Right ventricle myocardium inferior (tissue), 1 donor: ENCODE measurements at regions of chr15 and their contacts with region 1.

Region 1: GRCh38 chr15:70892002-70892914 is at the starts of genes LRRC49 and THAP10:
- DNase-seq: peak; percentile 93
- ATAC-seq: peak; percentile 97
- total RNA-seq, gene LRRC49: 70.9 TPM
- total RNA-seq, gene THAP10: 3.7 TPM

Region 2: GRCh38 chr15:70775160-70775559 is 117.1 kb before region 1 on chr15:
- intact Hi-C with region 1: no loop called
- DNase-seq: no peak
- ATAC-seq: no peak

Region 3: DNA sequence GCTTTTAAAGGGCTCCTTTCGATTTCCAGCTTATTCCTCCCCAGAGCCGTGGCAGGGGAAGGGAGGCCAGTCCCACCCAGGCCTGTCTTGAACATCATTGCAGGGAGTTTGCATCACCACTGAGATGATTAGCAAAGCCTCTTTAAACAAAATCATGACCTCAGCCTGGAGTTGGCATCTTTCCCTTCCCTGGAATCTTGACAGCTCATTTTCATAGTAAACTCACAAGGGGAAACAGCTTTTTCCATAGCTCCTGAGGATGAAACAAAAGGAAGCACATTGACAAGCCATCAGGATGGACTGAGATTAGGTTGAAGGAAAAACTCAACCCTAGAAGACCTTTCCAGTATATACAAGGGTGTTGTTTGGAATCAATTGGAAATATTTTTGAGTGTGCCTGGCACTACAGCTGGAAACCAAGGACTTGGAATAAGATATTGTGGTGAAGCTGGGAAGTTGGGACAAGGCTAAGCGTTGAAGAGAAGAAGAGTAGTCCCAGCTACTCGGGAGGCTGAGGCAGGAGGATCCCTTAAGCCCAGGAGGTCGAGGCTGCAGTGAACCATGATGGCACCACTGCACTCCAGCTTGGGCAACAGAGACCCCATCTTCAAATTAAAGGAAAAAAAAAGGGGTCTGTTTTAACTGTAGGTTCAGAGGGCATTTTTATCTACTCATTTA is 35.2 kb before region 1 on chr15:
- intact Hi-C with region 1: no loop called
- DNase-seq: peak; percentile 79
- ATAC-seq: peak; percentile 81

Region 4: GRCh38 chr15:70964058-70964457 is 71.8 kb after region 1 on chr15:
- intact Hi-C with region 1: no loop called
- DNase-seq: no peak
- ATAC-seq: no peak

Region 5: GRCh38 chr15:71103102-71103676 is 210.9 kb after region 1 on chr15:
- intact Hi-C with region 1: loop called (anchors 2 kb)
- DNase-seq: no peak
- ATAC-seq: peak; percentile 42

Region 6: DNA sequence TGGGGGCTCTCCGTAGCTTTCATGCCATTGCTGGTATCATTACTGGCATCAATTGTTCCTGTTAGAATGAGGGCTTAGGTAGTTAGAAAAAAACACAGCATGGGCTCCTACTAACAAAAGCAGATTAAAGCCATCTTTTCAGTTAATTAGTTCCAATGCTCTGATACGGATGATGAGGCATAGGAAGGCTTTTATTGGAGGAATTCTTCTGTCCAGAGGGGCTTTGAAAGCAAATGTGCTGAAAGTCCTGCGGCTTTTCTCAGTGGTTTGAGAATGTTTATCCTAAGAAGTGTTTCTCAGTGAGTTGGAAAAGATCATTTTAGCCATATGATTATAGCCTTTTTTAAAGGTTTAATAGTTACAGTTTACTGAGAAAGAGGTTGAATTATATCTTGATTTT is 421.5 kb after region 1 on chr15:
- intact Hi-C with region 1: no loop called
- DNase-seq: no peak
- ATAC-seq: no peak

Region 7: GRCh38 chr15:71443538-71443937 is 551.3 kb after region 1 on chr15:
- intact Hi-C with region 1: loop called (anchors 1 kb)
- DNase-seq: no peak
- ATAC-seq: no peak

Region 8: DNA sequence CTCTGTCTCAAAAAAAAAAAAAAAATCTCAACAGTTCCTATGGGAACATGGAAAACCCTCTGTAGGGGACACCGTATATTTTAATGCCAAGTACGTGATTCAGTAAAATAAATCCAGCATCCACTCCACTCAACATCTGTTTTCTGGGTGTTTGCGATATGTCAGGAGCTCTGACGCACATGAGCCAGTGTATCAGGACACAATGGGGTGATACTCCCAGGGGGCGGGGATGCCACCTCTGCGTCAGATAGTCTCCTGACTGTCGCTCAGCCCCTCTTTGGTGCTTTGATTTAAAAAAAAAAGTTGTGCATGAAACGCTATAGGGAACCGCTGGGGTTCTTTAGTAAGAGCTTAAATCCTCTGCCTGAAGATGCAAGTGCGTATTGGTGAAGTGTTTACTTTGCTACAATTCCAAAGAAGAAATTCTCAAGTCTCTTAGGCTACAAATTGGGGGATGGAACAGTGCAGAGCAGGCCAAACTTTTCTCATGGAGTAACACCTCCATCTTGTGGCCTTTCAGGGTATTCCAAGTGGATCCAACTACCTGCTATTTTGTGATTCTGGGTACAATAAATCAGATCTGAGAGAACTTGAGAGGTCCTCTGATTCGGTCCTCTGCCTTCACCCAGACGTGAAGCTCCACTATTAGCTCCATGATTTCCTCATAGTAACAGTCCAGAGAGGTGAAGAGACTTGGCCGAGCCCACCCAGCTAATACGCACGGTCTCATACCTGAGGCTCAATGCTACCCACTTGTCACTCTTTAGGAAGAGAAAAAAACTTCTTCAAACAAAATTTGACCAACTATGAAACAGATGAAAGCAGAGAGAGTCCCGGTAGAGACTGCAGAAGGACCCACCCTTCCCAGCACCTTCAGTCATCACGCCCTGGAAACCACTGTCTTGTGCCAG is 908.8 kb after region 1 on chr15:
- intact Hi-C with region 1: loop called (anchors 5 kb)
- DNase-seq: no peak
- ATAC-seq: peak; percentile 77